Mucosa of descending colon (tissue), 3 donors: ENCODE measurements at regions of chr6 and their contacts with region 1.

Region 1: GRCh38 chr6:129893640-129894039 is 32.5 kb upstream of the TMEM244 start:
- DNase-seq: peak in 1 of 3 donors; percentile 23
- ATAC-seq: no peak
- H3K4me3 ChIP-seq: no peak overlapping the region
- H3K4me1 ChIP-seq: no peaks in the 10 kb centered on the region
- CTCF ChIP-seq: no peak

Region 2: GRCh38 chr6:130020907-130021629 is 127.4 kb after region 1 on chr6:
- intact Hi-C with region 1: loop called in 1 of 2 experiments (anchors 10 kb)
- DNase-seq: peak; percentile 57 to 93 (median 74)
- ATAC-seq: peak; percentile 84
- H3K4me3 ChIP-seq: peak overlapping the region; percentile 59
- H3K4me1 ChIP-seq: peaks cover 4% of the 10 kb centered on the region
- CTCF ChIP-seq: peak; percentile 58